Activated naive CD4-positive, alpha-beta T cell treated with anti-CD3 and anti-CD28 coated beads for 36 hours (primary cell): ENCODE measurements at regions of chr19 and their contacts with region 1.

Region 1: GRCh38 chr19:43765109-43765876 is 10.5 kb upstream of the SMG9 start:
- DNase-seq: peak; percentile 95
- H3K4me3 Mint-ChIP-seq: peak overlapping the region; percentile 53
- H3K27ac Mint-ChIP-seq: peak overlapping the region; percentile 100
- H3K4me1 Mint-ChIP-seq: peaks cover 80% of the 10 kb centered on the region
- H3K27me3 Mint-ChIP-seq: no peaks in the 10 kb centered on the region

Region 2: DNA sequence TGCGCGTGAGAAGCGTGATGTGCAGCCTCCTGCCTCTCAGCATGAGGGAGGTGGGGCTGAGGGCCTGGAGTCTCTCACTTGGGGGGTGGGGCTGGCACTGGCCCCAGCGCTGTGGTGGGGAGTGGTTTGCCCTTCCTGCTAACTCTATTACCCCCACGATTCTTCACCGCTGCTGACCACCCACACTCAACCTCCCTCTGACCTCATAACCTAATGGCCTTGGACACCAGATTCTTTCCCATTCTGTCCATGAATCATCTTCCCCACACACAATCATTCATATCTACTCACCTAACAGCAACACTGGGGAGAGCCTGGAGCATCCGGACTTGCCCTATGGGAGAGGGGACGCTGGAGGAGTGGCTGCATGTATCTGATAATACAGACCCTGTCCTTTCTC is 403.1 kb before region 1 on chr19:
- CTCF ChIA-PET with region 1: no interaction called
- intact Hi-C with region 1: no loop called
- DNase-seq: no peak
- H3K4me3 Mint-ChIP-seq: no peak overlapping the region
- H3K27ac Mint-ChIP-seq: no peak overlapping the region
- H3K4me1 Mint-ChIP-seq: no peaks in the 10 kb centered on the region
- H3K27me3 Mint-ChIP-seq: no peaks in the 10 kb centered on the region

Region 3: GRCh38 chr19:43438291-43439096 is 326.8 kb before region 1 on chr19:
- CTCF ChIA-PET with region 1: no interaction called
- intact Hi-C with region 1: loop called (anchors 1 kb)
- DNase-seq: peak; percentile 43
- H3K4me3 Mint-ChIP-seq: no peak overlapping the region
- H3K27ac Mint-ChIP-seq: peak overlapping the region; percentile 51
- H3K4me1 Mint-ChIP-seq: peaks cover 27% of the 10 kb centered on the region
- H3K27me3 Mint-ChIP-seq: no peaks in the 10 kb centered on the region

Region 4: DNA sequence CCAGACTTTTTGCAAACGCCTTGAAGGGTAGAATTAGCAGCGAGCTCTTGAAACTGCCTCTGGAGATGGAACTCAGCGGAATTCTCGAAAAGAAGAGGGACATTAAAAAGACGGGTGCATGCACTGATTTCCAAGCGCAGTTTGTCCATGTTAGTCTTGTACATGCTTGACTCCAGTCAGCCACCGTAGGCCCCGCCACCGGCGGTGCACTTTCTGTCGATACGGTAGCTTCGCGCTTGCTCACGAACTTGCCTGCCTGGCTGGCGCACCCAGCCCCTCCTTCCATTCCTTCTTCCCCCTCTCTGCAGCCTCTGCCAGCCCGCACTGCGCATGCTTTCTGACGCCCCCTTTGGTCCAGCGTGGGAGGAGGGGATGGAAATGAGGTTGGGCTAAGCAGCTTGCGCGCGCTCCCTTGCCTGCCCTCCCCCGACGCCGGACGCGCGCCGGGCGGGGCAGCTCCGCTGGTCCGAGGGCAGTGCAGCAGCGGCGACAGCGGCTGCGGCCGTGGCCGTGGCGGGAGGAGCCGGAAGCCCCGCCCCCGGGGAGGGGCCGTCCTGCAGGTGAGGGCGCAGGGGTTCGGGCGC is 232.2 kb before region 1 on chr19 and contains the start of gene ZNF575:
- CTCF ChIA-PET with region 1: interaction called, 3 read pairs
- intact Hi-C with region 1: loop called (anchors 2 kb)
- DNase-seq: peak; percentile 92
- H3K4me3 Mint-ChIP-seq: peak within 1 kb of the TSS; percentile 80
- H3K27ac Mint-ChIP-seq: peak within 1 kb of the TSS; percentile 88
- H3K4me1 Mint-ChIP-seq: peaks cover 19% of the 10 kb centered on the region
- H3K27me3 Mint-ChIP-seq: no peaks in the 10 kb centered on the region
- total RNA-seq, gene ZNF575: 3.1 to 5.2 TPM

Region 5: GRCh38 chr19:43743022-43743421 is 22.3 kb before region 1 on chr19:
- CTCF ChIA-PET with region 1: interaction called, 50 read pairs
- intact Hi-C with region 1: loop called (anchors 1 kb)
- DNase-seq: no peak
- H3K4me3 Mint-ChIP-seq: no peak overlapping the region
- H3K27ac Mint-ChIP-seq: no peak overlapping the region
- H3K4me1 Mint-ChIP-seq: peaks cover 12% of the 10 kb centered on the region
- H3K27me3 Mint-ChIP-seq: no peaks in the 10 kb centered on the region

Region 6: GRCh38 chr19:43777163-43777700 is 11.9 kb after region 1 on chr19:
- CTCF ChIA-PET with region 1: interaction called, 113 read pairs
- intact Hi-C with region 1: loop called (anchors 1 kb)
- DNase-seq: peak; percentile 64
- H3K4me3 Mint-ChIP-seq: peak overlapping the region; percentile 76
- H3K27ac Mint-ChIP-seq: peak overlapping the region; percentile 94
- H3K4me1 Mint-ChIP-seq: peaks cover 61% of the 10 kb centered on the region
- H3K27me3 Mint-ChIP-seq: no peaks in the 10 kb centered on the region

Region 7: GRCh38 chr19:43872547-43873336 is 107.4 kb after region 1 on chr19:
- CTCF ChIA-PET with region 1: no interaction called
- intact Hi-C with region 1: no loop called
- DNase-seq: no peak
- H3K4me3 Mint-ChIP-seq: no peak overlapping the region
- H3K27ac Mint-ChIP-seq: no peak overlapping the region
- H3K4me1 Mint-ChIP-seq: no peaks in the 10 kb centered on the region
- H3K27me3 Mint-ChIP-seq: no peaks in the 10 kb centered on the region

Region 8: DNA sequence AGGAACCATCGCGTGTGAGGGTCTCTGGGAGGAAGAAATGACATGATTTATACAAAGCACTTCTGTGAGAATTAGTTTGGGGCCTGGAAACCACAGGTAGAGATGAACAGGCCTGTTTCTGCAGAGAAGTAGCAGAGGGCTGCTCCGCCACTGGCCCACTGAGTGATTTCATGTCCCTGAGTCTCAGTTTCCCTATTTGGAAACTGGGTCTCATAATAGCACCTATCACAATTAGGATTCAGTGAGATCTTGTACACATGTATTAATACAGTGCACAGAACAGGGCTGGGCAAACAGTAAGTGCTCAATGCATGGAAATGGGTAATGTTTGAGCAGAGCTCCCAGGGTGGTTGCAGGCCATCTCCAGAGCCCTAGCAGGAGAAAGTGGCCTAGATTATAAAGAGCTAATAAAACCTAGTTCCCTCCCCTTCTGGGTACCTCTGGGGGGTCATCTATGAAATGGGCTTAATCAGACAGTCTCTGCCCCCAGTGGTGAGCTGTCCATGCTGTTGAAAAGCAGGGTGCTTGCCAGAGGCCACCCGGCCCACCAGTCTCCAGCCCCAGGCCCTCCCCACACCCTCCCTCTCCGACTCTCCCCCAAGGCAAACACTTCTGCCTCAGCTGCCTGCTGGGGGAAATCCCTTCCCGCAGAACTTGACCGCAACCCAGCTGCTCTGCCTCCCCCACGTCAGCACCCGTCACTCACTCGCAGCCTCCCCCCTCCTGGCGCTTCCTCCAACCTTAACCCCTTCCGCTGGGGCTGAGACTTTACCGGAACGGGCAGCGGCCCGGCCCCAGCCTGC is 987.7 kb after region 1 on chr19:
- CTCF ChIA-PET with region 1: no interaction called
- intact Hi-C with region 1: loop called (anchors 5 kb)
- DNase-seq: peak; percentile 98
- H3K4me3 Mint-ChIP-seq: peak overlapping the region; percentile 93
- H3K27ac Mint-ChIP-seq: peak overlapping the region; percentile 97
- H3K4me1 Mint-ChIP-seq: peaks cover 59% of the 10 kb centered on the region
- H3K27me3 Mint-ChIP-seq: no peaks in the 10 kb centered on the region